Natural killer cell (primary cell): ENCODE measurements at regions of chr17 and their contacts with region 1.

Region 1: DNA sequence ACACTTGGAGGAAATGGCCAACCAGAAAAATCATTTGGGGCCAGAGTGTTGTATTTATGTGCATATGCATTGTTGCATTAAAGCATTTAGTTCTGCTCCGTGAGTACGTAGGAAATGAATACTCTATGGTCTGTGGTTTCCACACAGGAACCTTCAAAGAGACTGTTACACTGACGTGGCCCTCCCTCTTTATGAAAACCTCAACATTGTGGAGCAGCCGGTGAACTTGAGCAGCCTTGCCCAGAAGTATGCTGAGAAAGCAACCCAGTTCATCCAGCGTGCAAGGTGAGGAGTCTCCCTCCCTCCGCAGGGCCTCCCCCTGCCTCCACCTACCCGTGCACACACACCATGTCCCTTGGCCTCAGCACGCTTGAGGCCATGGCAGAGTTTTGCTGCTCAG is 65.2 kb downstream of the ARSG start:
- DNase-seq: peak; percentile 53 to 89
- ATAC-seq: peak; percentile 91 to 96 (median 93)
- H3K4me3 ChIP-seq: peak overlapping the region; percentile 5
- H3K4me3 Mint-ChIP-seq: peak overlapping the region; percentile 84
- H3K27ac ChIP-seq: peak overlapping the region; percentile 67
- H3K27ac Mint-ChIP-seq: peak overlapping the region; percentile 86 to 93
- H3K4me1 ChIP-seq: peaks cover 68% of the 10 kb centered on the region
- H3K4me1 Mint-ChIP-seq: peaks cover 65 to 68% of the 10 kb centered on the region in 2 donors
- H3K27me3 ChIP-seq: no peaks in the 10 kb centered on the region
- H3K27me3 Mint-ChIP-seq: no peaks in the 10 kb centered on the region
- CTCF ChIP-seq: no peak

Region 2: GRCh38 chr17:68179926-68180285 is 176.6 kb before region 1 on chr17:
- intact Hi-C with region 1: loop called (anchors 2 kb)
- DNase-seq: no peak
- ATAC-seq: no peak
- H3K4me3 ChIP-seq: no peak overlapping the region
- H3K4me3 Mint-ChIP-seq: no peak overlapping the region
- H3K27ac ChIP-seq: peak overlapping the region; percentile 75
- H3K27ac Mint-ChIP-seq: peak overlapping the region; percentile 95 to 97
- H3K4me1 ChIP-seq: peaks cover 56% of the 10 kb centered on the region
- H3K4me1 Mint-ChIP-seq: peaks cover 28 to 44% of the 10 kb centered on the region in 2 donors
- H3K27me3 ChIP-seq: no peaks in the 10 kb centered on the region
- H3K27me3 Mint-ChIP-seq: no peaks in the 10 kb centered on the region
- CTCF ChIP-seq: no peak

Region 3: GRCh38 chr17:68318103-68318991 is 38.2 kb before region 1 on chr17:
- intact Hi-C with region 1: loop called (anchors 5 kb)
- DNase-seq: no peak
- ATAC-seq: no peak
- H3K4me3 ChIP-seq: no peak overlapping the region
- H3K4me3 Mint-ChIP-seq: no peak overlapping the region
- H3K27ac ChIP-seq: no peak overlapping the region
- H3K27ac Mint-ChIP-seq: no peak overlapping the region
- H3K4me1 ChIP-seq: peaks cover 58% of the 10 kb centered on the region
- H3K4me1 Mint-ChIP-seq: peaks cover 59 to 68% of the 10 kb centered on the region in 2 donors
- H3K27me3 ChIP-seq: no peaks in the 10 kb centered on the region
- H3K27me3 Mint-ChIP-seq: no peaks in the 10 kb centered on the region
- CTCF ChIP-seq: no peak

Region 4: GRCh38 chr17:68346448-68346847 is 10.1 kb before region 1 on chr17:
- intact Hi-C with region 1: loop called (anchors 1 kb)
- DNase-seq: peak; percentile 59 to 79
- ATAC-seq: peak; percentile 77 to 89 (median 81)
- H3K4me3 ChIP-seq: no peak overlapping the region
- H3K4me3 Mint-ChIP-seq: peak overlapping the region; percentile 88
- H3K27ac ChIP-seq: peak overlapping the region; percentile 81
- H3K27ac Mint-ChIP-seq: peak overlapping the region; percentile 96 to 98
- H3K4me1 ChIP-seq: peaks cover 72% of the 10 kb centered on the region
- H3K4me1 Mint-ChIP-seq: peaks cover 71 to 80% of the 10 kb centered on the region in 2 donors
- H3K27me3 ChIP-seq: no peaks in the 10 kb centered on the region
- H3K27me3 Mint-ChIP-seq: no peaks in the 10 kb centered on the region
- CTCF ChIP-seq: no peak

Region 5: DNA sequence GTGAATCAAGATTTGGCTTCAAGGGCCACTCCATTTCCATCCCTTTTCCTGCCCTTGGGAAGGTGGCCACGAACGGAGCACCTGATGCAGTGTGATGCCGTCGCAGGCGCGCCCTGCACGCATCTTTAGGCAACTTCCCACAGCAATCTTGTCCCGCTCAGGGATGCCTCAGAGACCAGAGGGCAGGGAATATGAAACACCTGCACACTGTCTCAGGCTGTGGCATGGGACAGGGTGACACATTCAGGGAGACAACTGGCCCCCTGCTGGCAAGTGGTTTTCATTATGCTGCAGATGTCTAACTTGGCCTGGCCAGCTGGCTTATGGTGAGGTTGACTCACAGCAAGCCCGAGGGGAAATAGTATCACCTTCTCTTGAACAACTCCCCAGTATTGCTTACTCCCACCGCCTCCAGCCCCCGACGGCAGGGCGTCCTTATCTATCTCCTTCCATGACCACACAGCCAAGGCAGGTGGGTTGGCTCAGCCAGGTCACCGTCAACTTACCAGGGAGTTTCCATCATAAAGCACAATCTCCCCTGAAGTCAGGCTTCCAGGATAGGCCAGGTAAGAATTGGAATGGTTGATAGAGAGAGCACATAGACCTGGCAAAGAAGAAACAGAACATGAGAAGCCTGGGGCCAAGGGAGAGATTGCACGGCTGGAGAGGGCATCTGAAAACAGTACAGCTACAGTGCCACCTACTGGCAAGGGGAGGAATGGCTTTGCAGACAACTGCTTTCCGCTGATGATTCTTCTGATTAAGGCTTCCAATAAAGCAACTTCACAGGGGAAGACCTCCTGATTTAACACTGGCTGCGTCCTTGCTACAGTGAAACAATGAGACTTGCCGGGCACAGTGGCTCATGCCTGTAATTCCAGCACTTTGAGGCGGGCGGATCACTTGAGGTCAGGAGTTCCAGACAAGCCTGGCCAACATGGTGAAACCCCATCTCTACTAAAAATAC is 79.6 kb after region 1 on chr17:
- intact Hi-C with region 1: loop called (anchors 5 kb)
- DNase-seq: peak; percentile 78 to 94
- ATAC-seq: peak; percentile 80 to 90 (median 81)
- H3K4me3 ChIP-seq: no peak overlapping the region
- H3K4me3 Mint-ChIP-seq: peak overlapping the region; percentile 87
- H3K27ac ChIP-seq: no peak overlapping the region
- H3K27ac Mint-ChIP-seq: peak overlapping the region; percentile 96
- H3K4me1 ChIP-seq: peaks cover 32% of the 10 kb centered on the region
- H3K4me1 Mint-ChIP-seq: peaks cover 42 to 56% of the 10 kb centered on the region in 2 donors
- H3K27me3 ChIP-seq: no peaks in the 10 kb centered on the region
- H3K27me3 Mint-ChIP-seq: no peaks in the 10 kb centered on the region
- CTCF ChIP-seq: peak; percentile 83